Activated CD4-positive, alpha-beta memory T cell treated with anti-CD3 and anti-CD28 coated beads for 36 hours (primary cell): ENCODE measurements at regions of chr6 and their contacts with region 1.

Region 1: DNA sequence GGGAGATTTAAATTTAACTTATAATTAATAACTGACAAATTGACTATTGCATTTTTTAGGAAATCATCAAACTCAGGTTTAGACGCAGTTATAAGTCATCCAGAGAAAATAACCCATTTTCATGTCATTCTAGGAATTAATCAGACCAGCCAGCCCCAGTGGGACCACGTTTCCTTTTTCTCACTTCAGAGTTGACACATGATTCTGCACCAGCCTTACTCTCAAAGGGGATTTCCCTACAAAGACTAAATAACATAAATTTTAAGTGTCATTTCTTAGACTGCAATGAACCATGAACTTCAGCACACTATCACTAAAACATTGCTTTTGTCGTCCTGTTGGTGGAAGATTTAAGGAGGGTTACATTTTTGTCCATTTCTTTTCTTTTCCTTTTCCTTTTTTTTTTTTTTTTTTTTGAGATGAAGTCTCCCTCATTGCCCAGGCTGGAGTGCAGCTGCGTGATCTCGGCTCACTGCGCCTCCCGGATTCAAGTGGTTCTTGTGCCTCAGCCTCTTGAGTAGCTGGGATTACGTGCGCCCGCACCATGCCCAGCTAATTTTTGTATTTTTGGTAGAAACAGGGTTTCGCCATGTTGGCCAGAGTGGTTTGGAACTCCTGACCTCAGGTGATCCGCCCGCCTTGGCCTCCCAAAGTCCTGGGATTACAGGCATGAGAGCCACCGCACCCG is 3.6 kb downstream of the IPCEF1 start:
- DNase-seq: peak; percentile 73
- H3K4me3 Mint-ChIP-seq: no peak overlapping the region
- H3K27ac Mint-ChIP-seq: no peak overlapping the region
- H3K4me1 Mint-ChIP-seq: peaks cover 25% of the 10 kb centered on the region
- H3K27me3 Mint-ChIP-seq: peaks cover 36% of the 10 kb centered on the region

Region 2: DNA sequence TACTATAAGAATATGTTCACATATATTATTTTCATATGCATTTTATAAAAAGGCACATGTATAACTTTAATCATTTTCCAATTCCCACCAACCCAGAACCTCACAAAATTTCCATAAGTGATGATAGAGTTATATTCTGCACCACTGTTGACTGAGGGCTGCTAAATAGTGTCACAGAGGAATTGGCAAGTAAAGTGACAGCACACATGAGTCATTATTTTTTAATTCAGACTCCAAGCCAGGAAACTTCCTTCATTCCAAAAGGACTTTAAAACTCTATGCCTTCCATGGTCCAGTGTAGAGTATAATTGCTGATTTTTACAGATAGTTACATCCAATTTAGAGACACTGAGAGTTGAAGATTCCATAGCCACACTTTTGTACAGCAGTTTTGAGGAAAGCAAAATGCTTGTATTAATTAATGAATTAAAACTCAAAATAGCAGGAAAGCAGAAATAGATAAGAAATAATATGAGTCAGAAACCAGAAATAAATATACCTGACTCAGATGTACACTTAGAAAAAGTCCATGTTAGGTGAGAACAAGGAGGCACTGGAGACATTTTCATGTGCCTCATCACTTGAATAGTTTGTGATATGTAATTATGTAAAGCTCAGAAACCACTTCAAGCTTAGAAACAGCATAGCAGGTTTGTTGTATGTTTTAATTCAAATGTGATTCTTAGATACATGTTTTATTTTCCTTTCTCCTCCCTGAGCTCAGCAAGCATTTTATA is 739.2 kb before region 1 on chr6:
- CTCF ChIA-PET with region 1: no interaction called
- POLR2A ChIA-PET with region 1: no interaction called
- intact Hi-C with region 1: no loop called
- DNase-seq: no peak
- H3K4me3 Mint-ChIP-seq: no peak overlapping the region
- H3K27ac Mint-ChIP-seq: no peak overlapping the region
- H3K4me1 Mint-ChIP-seq: no peaks in the 10 kb centered on the region
- H3K27me3 Mint-ChIP-seq: no peaks in the 10 kb centered on the region

Region 3: GRCh38 chr6:154301839-154302752 is 50.9 kb before region 1 on chr6:
- CTCF ChIA-PET with region 1: no interaction called
- POLR2A ChIA-PET with region 1: no interaction called
- intact Hi-C with region 1: loop called (anchors 1 kb)
- DNase-seq: peak; percentile 43
- H3K4me3 Mint-ChIP-seq: no peak overlapping the region
- H3K27ac Mint-ChIP-seq: no peak overlapping the region
- H3K4me1 Mint-ChIP-seq: peaks cover 9% of the 10 kb centered on the region
- H3K27me3 Mint-ChIP-seq: peaks cover 2% of the 10 kb centered on the region

Region 4: DNA sequence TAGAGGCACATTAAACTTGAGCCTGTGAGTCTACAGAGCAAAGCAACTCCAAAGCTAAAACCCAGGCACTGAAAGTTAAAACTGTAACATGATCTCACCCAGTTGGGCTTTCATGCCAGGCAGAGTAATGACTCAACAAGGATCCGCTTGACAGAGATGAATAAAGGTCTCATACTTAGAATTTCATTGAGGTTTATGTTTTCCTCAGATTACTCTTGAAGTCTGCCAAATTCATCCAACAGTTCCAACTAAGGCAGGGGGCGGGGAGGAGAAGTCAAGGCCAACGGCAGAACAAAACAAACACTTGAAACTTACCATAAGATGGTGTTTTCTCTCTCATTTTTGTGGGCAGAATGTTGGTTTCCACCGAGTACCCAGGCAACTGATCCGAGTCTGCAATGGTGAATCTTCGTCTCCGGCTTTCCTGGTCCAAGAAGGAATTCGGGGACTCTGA is 57.6 kb after region 1 on chr6:
- CTCF ChIA-PET with region 1: no interaction called
- POLR2A ChIA-PET with region 1: no interaction called
- intact Hi-C with region 1: loop called (anchors 1 kb)
- DNase-seq: peak; percentile 77
- H3K4me3 Mint-ChIP-seq: no peak overlapping the region
- H3K27ac Mint-ChIP-seq: no peak overlapping the region
- H3K4me1 Mint-ChIP-seq: peaks cover 9% of the 10 kb centered on the region
- H3K27me3 Mint-ChIP-seq: peaks cover 20% of the 10 kb centered on the region

Region 5: DNA sequence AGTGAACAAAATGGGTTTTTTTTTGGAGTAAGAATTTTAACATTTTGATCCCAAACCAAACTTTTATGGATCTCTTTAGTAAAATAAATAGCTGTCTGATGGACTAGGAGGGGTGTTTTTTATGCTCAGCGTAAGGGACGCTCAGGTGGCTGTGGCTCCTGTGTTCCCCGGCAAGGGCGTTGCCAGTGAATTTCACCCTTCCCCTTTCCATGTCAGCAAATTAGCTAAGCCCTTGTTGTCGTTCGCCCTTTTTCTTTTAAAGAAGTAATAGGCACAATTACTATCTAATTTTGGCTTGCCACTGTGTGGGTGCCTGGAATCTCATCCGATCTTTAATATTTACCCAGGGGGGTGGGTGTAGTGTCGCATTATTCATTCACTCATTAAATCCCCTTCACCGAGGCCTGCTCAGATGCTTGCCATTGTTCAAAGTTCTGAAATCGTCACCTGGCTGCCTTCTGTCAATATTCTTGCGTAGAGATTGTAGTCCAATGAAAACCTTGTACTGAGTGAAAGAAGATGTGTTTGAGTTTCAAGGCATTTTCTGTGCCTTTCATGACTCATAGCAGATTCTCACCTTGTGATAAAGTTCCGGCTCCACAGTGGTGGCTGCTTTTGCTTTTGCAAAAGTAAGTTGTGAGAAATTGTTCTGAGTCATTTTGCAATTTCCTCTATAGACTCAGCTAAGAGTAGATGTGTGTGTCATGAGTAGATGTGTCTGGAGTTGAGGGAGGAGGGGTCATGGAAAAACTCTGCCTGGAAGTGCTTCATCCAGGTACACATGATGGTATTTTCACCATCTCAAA is 870.8 kb after region 1 on chr6:
- CTCF ChIA-PET with region 1: no interaction called
- POLR2A ChIA-PET with region 1: no interaction called
- intact Hi-C with region 1: loop called (anchors 5 kb)
- DNase-seq: peak; percentile 78
- H3K4me3 Mint-ChIP-seq: peak overlapping the region; percentile 40
- H3K27ac Mint-ChIP-seq: peak overlapping the region; percentile 75
- H3K4me1 Mint-ChIP-seq: peaks cover 17% of the 10 kb centered on the region
- H3K27me3 Mint-ChIP-seq: peaks cover 6% of the 10 kb centered on the region